GM23248 (cell line): ENCODE measurements at regions of chr1 and their contacts with region 1.

Region 1: GRCh38 chr1:170670802-170671628 is 7.1 kb downstream of the PRRX1 start:
- DNase-seq: peak; percentile 90
- H3K4me3 ChIP-seq: peak overlapping the region; percentile 96
- H3K27ac ChIP-seq: peak overlapping the region; percentile 97
- H3K4me1 ChIP-seq: peaks cover 74% of the 10 kb centered on the region
- H3K27me3 ChIP-seq: no peaks in the 10 kb centered on the region

Region 2: DNA sequence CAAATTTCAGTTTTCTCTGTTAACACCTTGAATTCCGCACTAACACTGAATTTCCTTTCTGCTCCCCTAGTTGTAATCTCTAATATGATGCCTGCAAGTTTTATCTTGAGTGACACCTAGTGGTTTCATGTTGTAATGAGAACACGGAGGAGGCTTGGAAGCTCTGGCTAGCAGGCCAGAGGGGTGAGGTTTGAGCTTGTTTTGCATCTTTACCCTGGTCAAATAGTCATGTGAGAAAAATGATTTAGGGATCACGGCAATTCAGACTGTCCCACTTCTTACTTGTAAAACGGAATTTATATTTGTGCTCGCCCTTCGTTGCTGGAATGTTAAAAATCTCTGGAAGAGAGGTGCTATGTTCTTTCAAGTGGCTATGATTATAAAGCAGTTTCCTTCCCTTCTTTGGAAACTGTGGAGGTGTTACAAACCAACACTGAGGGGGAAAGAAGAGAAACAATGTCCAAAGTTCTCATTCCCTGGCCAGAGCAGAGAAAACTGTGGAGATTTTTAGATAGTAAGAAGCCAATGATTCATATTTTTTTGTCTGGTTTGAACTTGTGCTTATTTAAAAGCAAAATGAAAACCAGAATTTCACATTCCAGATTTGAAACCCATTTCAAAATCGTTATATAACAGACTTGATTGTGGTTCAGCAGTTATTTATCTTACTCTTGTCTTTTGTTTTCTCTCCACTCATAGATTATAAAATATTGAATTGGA is 259.0 kb after region 1 on chr1:
- in situ Hi-C with region 1: loop called (anchors 10 kb)
- DNase-seq: peak; percentile 82
- H3K4me3 ChIP-seq: peak overlapping the region; percentile 63
- H3K27ac ChIP-seq: peak overlapping the region; percentile 83
- H3K4me1 ChIP-seq: peaks cover 27% of the 10 kb centered on the region
- H3K27me3 ChIP-seq: no peaks in the 10 kb centered on the region